ENCODE measurements at regions of chr6 and their contacts with region 1.

Region 1: DNA sequence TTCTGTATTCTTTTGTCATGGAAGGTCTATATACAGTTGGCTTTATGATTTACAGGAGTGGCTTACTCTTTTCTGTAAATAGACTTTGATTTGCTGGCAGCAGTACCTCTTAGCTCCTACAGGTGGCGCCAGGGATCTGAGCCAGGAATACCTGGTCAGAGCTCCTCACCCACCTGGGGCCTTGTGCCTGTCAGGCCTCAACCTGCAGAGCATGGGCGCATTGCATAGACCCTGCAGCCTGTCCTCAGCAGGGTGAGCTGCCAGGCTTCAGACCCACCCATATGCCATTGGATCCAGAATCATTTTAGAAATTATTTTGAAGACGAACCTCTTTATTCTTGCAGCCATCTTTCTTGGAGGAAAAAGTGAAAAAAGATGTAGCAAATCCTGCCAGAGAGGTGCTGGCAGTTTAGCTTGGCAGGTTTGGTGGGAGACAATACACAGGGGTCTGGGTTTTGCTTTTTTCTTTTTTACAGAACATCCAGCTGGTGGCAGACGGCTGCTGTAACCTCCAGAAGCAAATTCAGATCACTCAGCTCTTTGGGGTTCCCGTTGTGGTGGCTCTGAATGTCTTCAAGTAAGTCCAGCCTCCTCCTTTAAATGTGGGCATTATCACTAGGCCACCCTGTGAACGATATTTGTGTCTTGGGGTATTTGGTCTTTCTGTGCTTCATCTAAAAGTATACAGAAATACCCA is 149.1 kb downstream of the MTHFD1L start:
- ATAC-seq: peak; percentile 14 to 89 (median 86)
- H3K4me3 ChIP-seq: no peak overlapping the region
- H3K27ac ChIP-seq: no peak overlapping the region
- H3K4me1 ChIP-seq: peaks cover 16% of the 10 kb centered on the region in 2 donors

Region 2: GRCh38 chr6:151330134-151330696 is 315.7 kb after region 1 on chr6:
- in situ Hi-C with region 1: loop called in 7 of 9 experiments (anchors 10 to 25 kb)
- ATAC-seq: peak in 3 of 8 experiments; percentile 12 to 53 (median 44)
- H3K4me3 ChIP-seq: no peak overlapping the region
- H3K27ac ChIP-seq: no peak overlapping the region
- H3K4me1 ChIP-seq: peaks cover 0 to 4% of the 10 kb centered on the region in 2 donors